Adrenal gland (tissue), 19 donors: ENCODE measurements at regions of chr11 and their contacts with region 1.

Region 1: DNA sequence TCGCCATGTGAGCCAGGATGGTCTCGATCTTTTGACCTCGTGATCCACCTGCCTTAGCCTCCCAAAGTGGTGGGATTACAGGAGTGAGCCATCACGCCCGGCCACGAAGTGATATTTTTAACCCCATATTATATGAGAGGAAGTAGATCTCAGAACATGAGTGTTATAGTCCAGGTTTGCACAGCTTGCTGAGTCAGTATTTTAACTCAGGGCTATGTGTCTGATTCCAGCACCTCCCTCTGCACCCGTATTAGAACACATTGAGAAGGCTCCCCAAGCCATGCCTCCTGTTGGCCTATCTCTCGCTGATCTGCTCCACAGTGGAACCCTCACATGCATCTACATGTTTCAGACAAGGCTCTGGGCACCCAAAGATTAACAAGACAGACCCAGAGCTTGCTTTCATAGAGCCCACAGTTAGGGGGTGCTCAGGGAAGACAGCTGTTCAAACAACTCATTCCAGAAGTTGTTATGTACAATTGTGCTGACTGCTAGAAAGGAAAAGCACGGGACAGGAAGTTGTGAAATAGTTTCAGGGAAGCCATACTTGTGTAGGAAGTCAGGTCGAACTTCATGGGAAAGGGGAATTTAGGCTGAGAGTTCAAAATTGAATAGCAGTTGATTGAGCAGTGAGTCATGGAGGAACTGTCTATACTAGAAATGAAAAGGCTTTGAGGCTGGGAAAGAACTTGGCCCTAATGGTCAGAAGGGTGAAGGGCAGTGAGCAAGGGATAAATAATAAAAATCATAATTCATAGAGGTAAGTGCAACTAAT is 49.3 kb upstream of the CLPB start:
- DNase-seq: peak in 4 of 7 donors; percentile 27 to 47 (median 38)
- H3K4me3 ChIP-seq: no peak overlapping the region
- H3K27ac ChIP-seq: peak overlapping the region in 3 of 5 donors; percentile 16 to 84 (median 74)
- H3K4me1 ChIP-seq: no peaks in the 10 kb centered on the region
- H3K27me3 ChIP-seq: no peaks in the 10 kb centered on the region
- CTCF ChIP-seq: peak in 1 of 6 experiments; percentile 23
- POLR2A ChIP-seq: no peak

Region 2: GRCh38 chr11:72430741-72431570 is 52.6 kb before region 1 on chr11:
- intact Hi-C with region 1: no loop called
- DNase-seq: peak in 6 of 7 donors; percentile 41 to 74 (median 54)
- H3K4me3 ChIP-seq: no peak overlapping the region
- H3K27ac ChIP-seq: no peak overlapping the region
- H3K4me1 ChIP-seq: peaks cover 5 to 27% of the 10 kb centered on the region in 2 donors
- H3K27me3 ChIP-seq: no peaks in the 10 kb centered on the region
- CTCF ChIP-seq: peak; percentile 59 to 84 (median 76)
- POLR2A ChIP-seq: no peak

Region 3: DNA sequence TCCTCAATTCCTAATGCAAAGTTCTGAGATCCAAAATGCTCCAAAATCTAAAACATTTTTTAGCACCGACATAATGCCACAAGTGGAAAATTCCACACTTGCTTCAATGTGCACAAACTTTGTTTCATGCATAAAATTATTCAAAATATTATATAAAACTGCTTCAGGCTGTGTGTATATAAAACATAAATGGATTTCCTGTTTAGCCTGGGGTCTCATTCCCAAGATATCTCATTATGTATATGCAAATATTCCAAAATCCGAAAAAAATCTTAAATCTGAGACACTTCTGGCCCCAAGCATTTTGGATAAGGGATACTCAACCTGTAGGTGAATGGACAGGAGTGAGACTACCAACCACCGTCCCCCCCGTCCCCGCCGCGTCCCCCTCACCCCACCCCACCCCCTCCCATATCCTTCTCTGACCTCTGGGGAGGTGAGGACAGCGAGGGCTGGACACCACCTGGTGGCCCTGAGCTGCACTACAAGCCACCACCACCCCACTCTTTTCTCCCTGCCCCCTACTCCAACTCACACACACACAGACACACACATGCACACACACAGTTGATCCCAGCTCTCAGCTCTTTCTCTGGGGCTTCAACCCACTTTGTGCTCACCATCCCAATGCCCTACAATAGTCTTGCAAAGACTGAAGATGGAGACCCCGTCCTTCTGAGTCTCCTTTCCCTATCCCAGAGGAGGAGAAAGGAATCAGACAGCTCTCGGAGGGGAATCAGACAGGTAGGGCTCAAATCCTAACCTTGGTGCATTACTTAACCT is 89.7 kb after region 1 on chr11:
- intact Hi-C with region 1: loop called (anchors 5 kb)
- DNase-seq: peak in 4 of 7 donors; percentile 40 to 66 (median 51)
- H3K4me3 ChIP-seq: no peak overlapping the region
- H3K27ac ChIP-seq: no peak overlapping the region
- H3K4me1 ChIP-seq: no peaks in the 10 kb centered on the region
- H3K27me3 ChIP-seq: no peaks in the 10 kb centered on the region
- CTCF ChIP-seq: peak; percentile 29 to 83 (median 60)
- POLR2A ChIP-seq: no peak

Region 4: GRCh38 chr11:72579816-72580641 is 96.4 kb after region 1 on chr11:
- intact Hi-C with region 1: loop called in 1 of 2 experiments (anchors 5 kb)
- DNase-seq: peak in 4 of 7 donors; percentile 1 to 8 (median 6)
- H3K4me3 ChIP-seq: no peak overlapping the region
- H3K27ac ChIP-seq: no peak overlapping the region
- H3K4me1 ChIP-seq: no peaks in the 10 kb centered on the region
- H3K27me3 ChIP-seq: no peaks in the 10 kb centered on the region
- CTCF ChIP-seq: no peak
- POLR2A ChIP-seq: no peak

Region 5: DNA sequence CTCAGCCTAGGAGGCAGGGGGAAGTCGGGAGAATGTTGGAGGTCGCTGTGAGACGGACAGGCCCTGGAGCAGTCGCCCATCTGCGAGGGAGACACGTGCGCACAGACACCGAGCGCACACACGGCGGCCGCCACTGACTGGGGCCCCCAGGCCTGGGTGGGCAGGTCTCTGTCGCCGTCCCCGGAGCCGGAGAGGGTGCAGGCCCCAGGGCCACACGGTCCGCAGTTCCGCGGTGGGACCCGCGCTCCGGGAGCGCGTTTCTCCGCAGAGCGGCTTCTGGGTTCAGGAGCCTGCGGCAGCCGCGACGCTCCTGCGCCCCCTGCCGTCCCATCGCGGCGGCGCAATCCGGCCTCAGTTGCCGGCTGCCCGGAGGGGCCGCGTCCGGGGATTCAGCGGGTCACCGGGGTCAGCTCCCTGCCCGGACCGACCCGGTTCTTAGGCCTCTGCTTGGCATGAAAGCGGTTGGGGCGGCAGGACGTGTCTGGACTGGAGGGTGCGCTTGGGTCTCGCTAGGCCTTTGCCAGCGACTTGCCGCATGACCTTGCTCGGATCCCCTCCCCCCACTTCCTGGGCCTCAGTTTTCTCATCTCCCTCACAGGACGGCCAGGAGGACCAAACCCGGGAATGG is 159.4 kb after region 1 on chr11:
- intact Hi-C with region 1: loop called in 1 of 2 experiments (anchors 10 kb)
- DNase-seq: peak; percentile 42 to 72 (median 61)
- H3K4me3 ChIP-seq: peak overlapping the region in 2 of 4 donors; percentile 67 to 69
- H3K27ac ChIP-seq: peak overlapping the region in 2 of 5 donors; percentile 9 to 75
- H3K4me1 ChIP-seq: peaks cover 13 to 17% of the 10 kb centered on the region in 2 donors
- H3K27me3 ChIP-seq: no peaks in the 10 kb centered on the region
- CTCF ChIP-seq: peak; percentile 87 to 98 (median 95)
- POLR2A ChIP-seq: no peak